Activated T-helper 1 cell treated with anti-CD3 and anti-CD28 coated beads, Interleukin-12 subunit alpha, Interleukin-12 subunit beta, Interleukin-2, Interleukin-4 antibody, amounts not matched to agents 30 ng/mL and 10 ng/mL and 1 ng/mL, durations not matched to agents 14 hours and 24 hours and 36 hours (primary cell): ENCODE measurements at regions of chr5 and their contacts with region 1.

Region 1: GRCh38 chr5:38922199-38922598 is 76.4 kb downstream of the OSMR start:
- DNase-seq: peak; percentile 9
- H3K4me3 Mint-ChIP-seq: no peak overlapping the region
- H3K27ac Mint-ChIP-seq: no peak overlapping the region
- H3K4me1 Mint-ChIP-seq: no peaks in the 10 kb centered on the region
- H3K27me3 Mint-ChIP-seq: peaks cover 14% of the 10 kb centered on the region

Region 2: GRCh38 chr5:38831909-38832308 is 90.3 kb before region 1 on chr5:
- intact Hi-C with region 1: loop called (anchors 1 kb)
- DNase-seq: no peak
- H3K4me3 Mint-ChIP-seq: no peak overlapping the region
- H3K27ac Mint-ChIP-seq: no peak overlapping the region
- H3K4me1 Mint-ChIP-seq: peaks cover 9% of the 10 kb centered on the region
- H3K27me3 Mint-ChIP-seq: peaks cover 20% of the 10 kb centered on the region

Region 3: DNA sequence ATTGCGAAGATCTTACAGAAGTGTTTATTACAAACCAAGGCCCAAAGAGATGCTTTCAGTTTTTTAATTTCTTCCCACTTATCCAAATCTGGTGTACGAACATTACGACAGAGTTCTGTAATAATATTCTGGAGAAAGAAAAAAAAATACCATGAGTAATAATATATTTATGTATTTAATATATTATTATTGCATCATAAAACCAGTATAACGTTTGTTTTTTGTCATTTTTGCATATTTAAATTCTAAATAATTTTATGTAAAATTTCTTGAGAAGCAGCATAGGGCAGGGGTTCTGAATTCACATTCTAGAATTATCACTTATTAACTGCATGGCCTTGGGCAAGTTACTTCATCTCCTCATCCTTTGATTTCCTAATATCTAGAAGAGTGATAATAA is 31.2 kb after region 1 on chr5:
- intact Hi-C with region 1: no loop called
- DNase-seq: no peak
- H3K4me3 Mint-ChIP-seq: no peak overlapping the region
- H3K27ac Mint-ChIP-seq: no peak overlapping the region
- H3K4me1 Mint-ChIP-seq: no peaks in the 10 kb centered on the region
- H3K27me3 Mint-ChIP-seq: no peaks in the 10 kb centered on the region